ENCODE measurements at regions of chr11 and their contacts with region 1.

Region 1: DNA sequence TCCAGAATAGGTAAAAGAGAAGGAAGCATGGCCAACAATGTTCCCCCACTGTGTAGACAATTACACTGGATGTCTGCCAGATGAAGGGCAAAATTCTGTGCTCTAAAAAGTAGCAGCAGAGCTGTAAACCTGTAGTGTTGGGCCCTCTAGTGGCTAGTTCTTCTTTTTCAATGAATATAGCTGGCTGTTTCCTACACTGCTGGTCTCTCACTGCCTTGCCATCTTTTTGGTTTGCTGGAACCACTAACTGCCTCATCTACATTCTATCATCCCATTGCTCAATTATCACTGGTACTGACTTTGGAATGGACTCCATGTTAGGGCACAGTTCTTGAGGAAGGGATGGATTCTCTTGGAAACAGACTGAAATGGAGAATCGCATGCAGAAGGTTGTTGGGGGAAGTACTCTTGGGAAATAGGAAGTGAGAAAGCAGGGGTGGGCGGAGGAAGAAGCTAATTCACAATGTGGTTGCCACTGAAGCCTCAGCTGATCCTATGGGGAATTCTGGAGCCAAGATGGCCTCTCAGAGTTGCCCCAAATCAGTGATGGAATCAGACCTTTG is 17.9 kb downstream of the KCNE3 start:
- DNase-seq: no peak
- ATAC-seq: peak; percentile 88 to 89

Region 2: GRCh38 chr11:74255741-74256369 is 193.6 kb before region 1 on chr11:
- intact Hi-C with region 1: loop called (anchors 2 to 5 kb)
- DNase-seq: peak; percentile 33
- ATAC-seq: peak; percentile 58 to 65

Region 3: GRCh38 chr11:74388678-74389327 is 60.6 kb before region 1 on chr11:
- intact Hi-C with region 1: loop called (anchors 2 to 5 kb)
- DNase-seq: peak; percentile 44
- ATAC-seq: peak in 1 of 2 donors; percentile 80

Region 4: DNA sequence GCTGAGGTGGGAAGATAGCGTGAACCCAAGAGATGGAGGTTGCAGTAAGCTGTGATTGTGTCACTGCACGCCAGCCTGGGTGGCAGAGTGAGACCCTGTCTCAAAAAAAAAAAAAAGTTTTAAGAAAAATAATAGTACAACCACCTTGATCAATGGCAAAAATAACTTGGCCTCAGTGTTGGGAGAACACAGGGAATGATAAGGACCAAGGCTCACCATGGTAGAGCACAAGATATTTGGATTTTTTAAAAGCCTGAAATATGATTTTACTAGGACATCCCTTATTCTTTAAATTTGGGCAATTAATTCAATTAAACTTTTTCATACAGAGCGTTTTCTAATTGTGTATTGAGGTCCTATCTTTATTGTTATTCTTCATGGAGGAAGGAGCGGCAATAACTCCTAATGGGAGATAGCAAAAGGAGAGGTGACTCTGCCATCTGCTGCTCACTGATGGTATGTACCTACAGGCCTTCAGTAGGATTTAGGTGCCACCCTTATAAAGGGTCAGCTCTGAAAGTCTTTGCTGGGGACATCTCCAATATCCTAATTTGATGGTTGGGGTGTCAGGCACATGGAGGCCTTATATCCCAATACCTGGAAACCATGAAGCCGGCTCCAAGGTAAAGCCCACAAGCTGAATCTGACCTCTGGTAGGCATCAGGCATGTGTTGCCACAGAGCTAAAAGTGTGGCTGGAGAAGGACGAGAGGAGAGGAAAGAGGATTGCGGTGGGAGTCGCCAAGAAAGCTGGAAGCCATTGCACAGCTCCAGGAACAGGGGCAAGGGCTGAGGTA is 121.0 kb after region 1 on chr11:
- intact Hi-C with region 1: loop called in 1 of 2 experiments (anchors 1 kb)
- DNase-seq: peak; percentile 40
- ATAC-seq: peak; percentile 68 to 76

Region 5: DNA sequence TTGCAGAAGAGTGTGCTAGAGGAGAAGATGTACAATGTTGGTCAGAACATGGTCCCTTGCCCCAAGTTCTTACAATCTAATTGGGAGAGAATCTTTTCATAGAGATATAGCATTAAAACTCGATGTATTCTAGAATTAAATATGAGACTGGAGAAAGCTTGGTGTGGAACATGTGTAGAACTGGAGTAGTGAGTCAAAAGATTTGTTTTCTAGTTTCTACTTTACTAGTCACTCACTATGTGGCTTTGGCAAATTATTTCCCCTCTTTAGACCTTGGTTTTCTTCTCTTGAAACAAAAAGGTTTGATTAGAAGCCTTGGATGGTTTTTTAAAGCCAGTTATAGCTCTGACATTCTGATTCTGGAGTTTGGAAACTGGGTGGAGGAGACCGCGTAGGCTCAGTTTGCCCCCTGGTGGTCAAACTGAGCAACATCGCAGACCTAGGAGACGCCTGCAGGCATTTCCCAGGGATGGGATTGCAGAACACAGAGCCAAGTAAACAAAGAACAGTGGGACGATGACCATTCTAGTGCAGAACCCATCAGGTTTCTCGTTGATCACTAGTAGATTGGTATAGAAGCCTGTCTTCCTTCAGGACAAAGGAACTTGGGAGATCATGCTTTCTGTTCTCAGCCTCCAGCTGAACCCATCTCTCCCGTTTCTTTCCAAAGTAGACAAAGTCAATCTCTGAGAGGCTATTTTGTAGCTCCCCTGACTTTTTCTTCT is 290.3 kb after region 1 on chr11:
- intact Hi-C with region 1: loop called in 1 of 2 experiments (anchors 10 kb)
- DNase-seq: peak; percentile 48
- ATAC-seq: peak; percentile 92 to 95